Esophagus squamous epithelium (tissue), 5 donors: ENCODE measurements at regions of chr5 and their contacts with region 1.

Region 1: DNA sequence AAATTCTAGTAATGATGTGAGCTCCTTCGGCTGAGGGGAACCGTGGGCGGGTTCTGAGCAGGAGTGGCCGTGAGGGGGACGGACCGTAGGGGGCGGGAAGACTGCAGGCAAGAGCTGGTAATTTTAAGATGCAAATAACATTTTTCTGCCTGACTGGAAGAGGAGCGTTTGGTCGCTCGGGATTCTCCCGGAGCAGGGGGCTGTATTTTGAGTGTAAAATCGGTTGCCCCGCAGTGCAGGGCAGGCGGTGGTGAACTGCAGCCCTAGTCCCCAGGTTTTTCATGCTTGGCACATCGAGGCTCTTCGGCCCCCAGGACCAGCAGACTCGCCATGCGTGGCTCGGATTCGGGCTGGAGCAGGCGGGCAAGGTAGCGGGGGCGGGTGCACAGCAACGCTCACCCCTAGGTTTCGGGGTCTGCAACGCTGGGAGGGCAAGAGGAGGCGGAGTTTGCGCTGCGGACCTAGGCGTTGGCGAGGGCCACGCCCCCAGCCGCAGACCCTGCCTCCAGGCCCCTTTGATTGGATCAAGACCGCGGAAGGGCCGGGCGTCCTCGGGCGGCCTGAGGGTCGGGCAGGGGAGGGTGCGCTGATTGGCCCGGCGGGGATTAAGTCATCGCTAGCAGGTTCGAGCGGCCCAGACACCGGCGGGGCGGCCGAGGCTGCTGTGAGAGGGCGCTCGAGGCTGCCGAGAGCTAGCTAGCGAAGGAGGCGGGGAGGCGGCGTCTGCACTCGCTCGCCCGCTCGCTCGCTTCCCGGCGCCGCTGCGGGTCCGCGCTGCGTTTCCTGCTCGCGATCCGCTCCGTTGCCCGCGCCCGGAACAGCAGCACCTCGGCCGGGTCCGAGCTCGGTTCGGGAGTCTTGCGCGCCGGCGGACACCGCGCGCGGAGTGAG is at the start of gene ARHGAP26:
- DNase-seq: peak; percentile 85
- H3K4me3 ChIP-seq: peak within 1 kb of the TSS; percentile 65 to 91 (median 78)
- H3K27ac ChIP-seq: peak within 1 kb of the TSS; percentile 86 to 93 (median 92)
- H3K4me1 ChIP-seq: peaks cover 5 to 32% (median 17%) of the 10 kb centered on the region in 3 donors
- H3K27me3 ChIP-seq: no peaks in the 10 kb centered on the region
- CTCF ChIP-seq: peak in 4 of 6 experiments; percentile 16 to 30 (median 26)
- POLR2A ChIP-seq: peak in 3 of 4 donors; percentile 99 to 100 (median 99)
- total RNA-seq, gene ARHGAP26: 4.4 to 18.7 (median 15.4) TPM

Region 2: DNA sequence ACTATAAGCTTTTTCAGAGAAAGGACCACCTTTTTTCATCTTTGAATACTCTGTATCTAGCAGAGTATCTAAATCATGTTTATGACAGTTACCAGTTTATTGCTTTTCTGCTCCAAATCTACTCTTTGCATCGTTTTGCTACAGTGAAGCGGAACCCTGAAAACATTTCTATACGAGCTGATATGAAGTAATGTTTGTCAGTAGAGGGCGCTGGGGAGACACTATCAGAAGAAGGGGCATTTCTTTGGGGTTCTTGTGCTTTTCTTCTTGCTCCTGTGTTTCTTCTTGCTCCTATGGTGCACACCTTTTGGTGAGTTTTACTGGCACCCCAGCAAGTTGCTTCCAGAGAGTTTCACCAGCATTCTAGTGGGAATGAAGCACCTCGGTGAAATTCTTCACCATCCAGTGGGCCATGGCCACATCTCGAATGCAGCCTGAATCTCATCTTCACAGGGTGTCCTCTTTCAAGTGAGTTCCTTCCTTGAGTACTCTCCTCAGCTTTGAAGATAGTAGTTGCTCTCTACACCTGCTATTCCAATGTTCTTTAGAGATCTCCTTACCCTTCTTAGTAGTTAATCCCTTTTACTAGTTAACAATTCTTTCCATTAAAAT is 182.5 kb before region 1 on chr5:
- intact Hi-C with region 1: no loop called
- DNase-seq: no peak
- H3K4me3 ChIP-seq: no peak overlapping the region
- H3K27ac ChIP-seq: no peak overlapping the region
- H3K4me1 ChIP-seq: no peaks in the 10 kb centered on the region
- H3K27me3 ChIP-seq: peaks cover 0 to 26% (median 0%) of the 10 kb centered on the region in 4 donors
- CTCF ChIP-seq: peak in 2 of 6 experiments; percentile 28 to 40
- POLR2A ChIP-seq: no peak

Region 3: GRCh38 chr5:142611154-142611553 is 158.8 kb before region 1 on chr5:
- intact Hi-C with region 1: no loop called
- DNase-seq: no peak
- H3K4me3 ChIP-seq: no peak overlapping the region
- H3K27ac ChIP-seq: no peak overlapping the region
- H3K4me1 ChIP-seq: no peaks in the 10 kb centered on the region
- H3K27me3 ChIP-seq: no peaks in the 10 kb centered on the region
- CTCF ChIP-seq: peak; percentile 31 to 94 (median 85)
- POLR2A ChIP-seq: no peak

Region 4: DNA sequence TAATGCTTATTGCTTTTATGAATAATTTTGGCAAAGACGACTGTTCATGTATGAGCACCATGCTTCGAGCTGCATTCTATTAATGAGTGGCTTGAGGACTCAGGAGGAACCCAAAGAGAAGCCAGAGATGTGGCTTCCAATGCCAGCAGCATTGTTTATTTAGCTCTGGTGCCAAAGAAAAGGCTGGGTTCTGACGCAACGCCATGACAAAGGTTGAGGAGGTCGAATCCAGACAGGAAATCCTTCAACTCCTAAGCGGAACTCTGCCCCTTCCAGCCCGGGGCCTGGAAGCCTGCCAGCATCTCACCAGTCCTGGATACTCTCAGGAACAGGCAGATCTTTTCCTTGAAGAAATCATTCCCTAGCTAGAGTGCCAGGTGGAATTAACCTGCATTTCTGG is 104.6 kb after region 1 on chr5:
- intact Hi-C with region 1: loop called (anchors 5 kb)
- DNase-seq: no peak
- H3K4me3 ChIP-seq: no peak overlapping the region
- H3K27ac ChIP-seq: peak overlapping the region in 3 of 4 donors; percentile 14 to 65 (median 25)
- H3K4me1 ChIP-seq: peaks cover 6 to 60% (median 43%) of the 10 kb centered on the region in 3 donors
- H3K27me3 ChIP-seq: no peaks in the 10 kb centered on the region
- CTCF ChIP-seq: no peak
- POLR2A ChIP-seq: no peak